Right ventricle myocardium inferior (tissue), 1 donor: ENCODE measurements at regions of chr10 and their contacts with region 1.

Region 1: DNA sequence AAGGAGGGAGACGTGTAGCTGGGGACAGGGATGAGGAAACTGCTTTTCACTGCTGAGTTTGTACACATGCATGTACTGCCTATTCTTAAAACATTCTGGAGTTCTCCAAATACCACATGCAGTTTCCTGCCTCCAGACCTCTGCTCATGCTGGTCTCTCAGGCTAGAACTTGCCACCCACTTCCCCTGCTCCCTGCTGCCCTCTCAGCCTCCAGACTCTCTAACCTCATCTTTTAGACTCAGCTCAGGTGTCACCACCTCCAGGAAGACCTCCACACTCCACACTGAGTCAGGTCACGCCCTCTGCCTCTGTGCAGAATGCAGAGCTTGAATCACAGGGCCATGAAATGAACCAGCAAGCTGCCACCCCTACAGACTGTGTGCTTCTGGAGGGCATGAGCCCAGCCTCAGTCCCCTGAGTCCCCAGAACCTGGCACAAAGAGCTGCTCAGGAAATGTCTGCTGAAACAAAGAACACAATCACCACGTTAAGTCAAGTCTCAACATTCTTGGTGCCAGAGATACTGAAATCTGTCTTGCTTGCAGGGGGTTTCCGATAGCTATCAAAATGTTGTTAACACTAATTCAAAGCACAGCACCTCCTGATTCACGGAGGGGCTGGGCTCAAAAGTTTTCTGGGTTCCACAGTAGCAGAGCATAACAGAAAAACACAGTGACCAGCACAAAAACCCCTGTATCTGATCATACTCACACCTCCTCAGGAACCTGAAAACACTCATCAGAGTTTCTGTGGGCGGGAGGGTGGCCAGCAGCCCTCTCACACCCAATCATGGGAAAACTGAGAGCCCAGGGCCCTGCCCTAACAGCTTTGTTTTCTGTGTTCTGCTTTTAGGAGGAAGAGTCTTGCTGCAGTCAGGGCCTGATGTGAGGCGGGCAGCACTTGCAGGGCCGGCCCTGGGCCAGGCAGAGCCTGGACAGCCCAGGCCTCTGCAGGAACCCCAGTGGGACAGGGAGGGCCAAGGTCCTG is 21.1 kb downstream of the FAM53B start:
- DNase-seq: peak; percentile 78
- ATAC-seq: peak; percentile 68

Region 2: DNA sequence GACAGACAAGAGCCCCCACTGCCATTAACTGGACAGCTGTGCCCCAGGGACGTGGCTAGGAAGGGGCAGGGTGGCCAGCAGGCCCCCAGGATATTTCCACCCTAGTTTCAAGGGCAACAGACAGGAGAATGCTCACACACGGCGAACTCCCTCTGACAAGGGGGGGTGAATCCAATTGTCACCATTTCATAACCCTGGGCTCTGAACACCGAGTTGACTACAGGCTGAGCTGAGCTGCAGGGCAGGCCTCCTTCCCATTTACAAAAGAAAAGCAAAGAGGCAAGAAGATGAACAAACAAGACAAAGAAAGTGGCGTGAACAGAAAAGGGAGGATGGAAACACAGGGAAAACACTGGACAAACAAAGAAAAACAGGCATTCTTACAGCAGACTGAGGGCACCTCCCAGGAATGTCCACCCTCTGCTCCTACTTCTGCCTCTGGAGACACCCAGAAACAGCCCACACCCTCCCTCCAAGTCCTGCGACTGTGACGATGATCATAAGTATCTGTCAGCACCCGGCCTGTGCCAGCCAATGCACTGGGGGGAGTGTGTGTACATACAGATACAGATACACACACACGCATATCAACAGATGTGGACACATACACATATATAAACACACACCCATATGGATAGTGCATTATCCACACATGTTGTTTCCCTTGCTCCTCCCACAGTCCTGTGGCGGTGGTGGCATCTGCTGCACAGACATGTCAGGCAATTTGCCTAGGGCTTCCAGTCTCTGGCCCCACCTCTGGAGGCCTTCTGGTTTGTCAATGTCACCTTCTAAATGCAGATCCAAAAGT is 45.1 kb before region 1 on chr10:
- intact Hi-C with region 1: loop called (anchors 5 kb)
- DNase-seq: no peak
- ATAC-seq: peak; percentile 79

Region 3: DNA sequence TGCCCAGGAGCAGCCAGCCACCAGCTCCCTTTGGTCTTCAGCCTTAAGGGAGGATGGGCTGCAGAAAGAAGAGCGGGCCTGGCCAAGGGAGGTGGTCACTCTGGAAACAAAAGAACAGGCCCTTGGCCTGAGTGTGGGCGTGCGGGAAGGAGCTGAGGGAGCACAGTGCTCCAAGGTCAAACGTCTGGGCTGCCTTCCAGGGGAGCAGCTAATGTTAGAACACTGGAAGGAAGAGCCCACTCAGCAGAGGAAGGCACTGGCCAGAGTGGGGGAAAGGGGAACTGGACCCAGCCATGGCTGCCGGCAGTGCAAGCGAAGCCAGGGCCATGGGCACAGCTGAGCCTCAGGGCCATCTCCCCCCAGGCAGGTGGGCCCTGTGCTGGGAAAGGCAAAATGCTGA is 21.7 kb before region 1 on chr10:
- intact Hi-C with region 1: loop called (anchors 2 kb)
- DNase-seq: peak; percentile 95
- ATAC-seq: peak; percentile 86